ENCODE measurements at regions of chr3 and their contacts with region 1.

Region 1: GRCh38 chr3:149808209-149808829 is 4.7 kb upstream of the RNF13 start:
- DNase-seq: peak; percentile 67
- ATAC-seq: no peak
- H3K4me3 Mint-ChIP-seq: no peak overlapping the region
- H3K27ac Mint-ChIP-seq: no peak overlapping the region
- H3K4me1 Mint-ChIP-seq: peaks cover 13% of the 10 kb centered on the region
- H3K27me3 Mint-ChIP-seq: peaks cover 24% of the 10 kb centered on the region

Region 2: GRCh38 chr3:149258298-149258697 is 550.0 kb before region 1 on chr3:
- CTCF ChIA-PET with region 1: no interaction called
- DNase-seq: no peak
- ATAC-seq: no peak
- H3K4me3 Mint-ChIP-seq: no peak overlapping the region
- H3K27ac Mint-ChIP-seq: no peak overlapping the region
- H3K4me1 Mint-ChIP-seq: peaks cover 6% of the 10 kb centered on the region
- H3K27me3 Mint-ChIP-seq: peaks cover 7% of the 10 kb centered on the region

Region 3: DNA sequence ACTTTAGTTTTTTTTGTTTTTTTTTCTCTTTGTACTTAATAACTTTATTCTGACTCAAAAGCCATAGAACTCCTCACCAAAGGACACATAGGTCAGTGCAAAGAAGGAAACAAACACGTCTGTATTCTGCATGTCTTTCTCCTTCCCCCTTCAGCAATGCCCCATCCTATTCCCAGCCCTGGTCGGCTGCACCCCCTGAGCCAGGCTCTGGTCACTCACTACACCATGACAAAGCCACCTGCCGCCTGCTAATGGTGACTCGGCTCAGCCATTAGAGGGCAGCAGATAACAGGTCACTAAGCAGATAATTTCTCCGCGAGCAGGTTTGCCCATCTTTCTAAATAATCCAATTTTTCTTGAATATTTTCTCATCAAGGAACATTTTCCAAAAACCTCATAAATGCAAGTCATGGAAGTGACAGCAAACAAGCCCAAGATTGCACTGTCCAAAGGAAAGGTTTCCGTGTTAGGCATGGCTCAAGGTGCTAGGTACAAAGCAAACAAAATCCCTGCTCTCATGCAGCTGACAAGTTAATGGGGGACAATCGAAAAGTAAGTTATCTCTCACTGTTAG is 296.0 kb before region 1 on chr3:
- CTCF ChIA-PET with region 1: interaction called, 10 read pairs
- DNase-seq: peak; percentile 66
- ATAC-seq: peak; percentile 59
- H3K4me3 Mint-ChIP-seq: no peak overlapping the region
- H3K27ac Mint-ChIP-seq: no peak overlapping the region
- H3K4me1 Mint-ChIP-seq: peaks cover 16% of the 10 kb centered on the region
- H3K27me3 Mint-ChIP-seq: peaks cover 2% of the 10 kb centered on the region

Region 4: DNA sequence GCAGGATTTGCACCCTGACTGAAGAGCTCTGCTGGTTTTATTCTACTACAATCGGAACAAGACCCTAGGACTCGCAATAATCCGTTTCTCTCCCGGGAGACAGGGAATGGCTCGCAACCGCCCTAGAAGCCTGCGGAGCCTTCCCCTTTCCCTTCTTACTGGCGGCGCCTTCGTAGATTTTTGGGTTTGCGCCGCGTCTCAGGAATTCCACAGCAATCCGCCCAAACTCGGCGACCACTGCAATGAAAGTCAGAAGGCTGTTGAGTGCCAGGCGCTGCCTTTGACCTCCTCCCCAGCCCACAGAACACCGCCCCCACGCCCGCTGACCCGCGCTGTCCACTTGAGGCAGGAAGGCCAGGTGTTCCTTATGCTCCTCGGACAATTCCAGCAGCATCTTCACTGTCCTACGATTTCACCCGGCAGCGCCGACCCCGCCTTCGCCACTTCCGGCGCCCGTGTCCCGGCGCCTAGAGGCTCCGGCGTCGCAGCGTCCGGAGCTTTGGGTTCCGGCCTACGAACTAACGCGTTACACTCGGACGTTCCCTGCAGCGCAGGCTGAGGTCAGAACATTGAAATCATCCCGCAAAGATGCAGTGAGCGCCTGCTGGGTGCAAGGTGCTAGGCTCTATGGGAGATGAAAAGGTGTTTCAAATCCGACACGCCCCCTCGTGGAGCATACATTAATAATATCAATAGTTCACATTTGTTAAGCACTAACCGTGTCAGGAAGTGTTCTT is 56.1 kb before region 1 on chr3 and contains the start of gene COMMD2:
- CTCF ChIA-PET with region 1: interaction called, 18 read pairs
- DNase-seq: peak; percentile 91
- ATAC-seq: peak; percentile 98
- H3K4me3 Mint-ChIP-seq: peak within 1 kb of the TSS; percentile 96
- H3K27ac Mint-ChIP-seq: peak within 1 kb of the TSS; percentile 91
- H3K4me1 Mint-ChIP-seq: peaks cover 28% of the 10 kb centered on the region
- H3K27me3 Mint-ChIP-seq: no peaks in the 10 kb centered on the region
- total RNA-seq, gene COMMD2: 35.5 to 38.9 TPM

Region 5: DNA sequence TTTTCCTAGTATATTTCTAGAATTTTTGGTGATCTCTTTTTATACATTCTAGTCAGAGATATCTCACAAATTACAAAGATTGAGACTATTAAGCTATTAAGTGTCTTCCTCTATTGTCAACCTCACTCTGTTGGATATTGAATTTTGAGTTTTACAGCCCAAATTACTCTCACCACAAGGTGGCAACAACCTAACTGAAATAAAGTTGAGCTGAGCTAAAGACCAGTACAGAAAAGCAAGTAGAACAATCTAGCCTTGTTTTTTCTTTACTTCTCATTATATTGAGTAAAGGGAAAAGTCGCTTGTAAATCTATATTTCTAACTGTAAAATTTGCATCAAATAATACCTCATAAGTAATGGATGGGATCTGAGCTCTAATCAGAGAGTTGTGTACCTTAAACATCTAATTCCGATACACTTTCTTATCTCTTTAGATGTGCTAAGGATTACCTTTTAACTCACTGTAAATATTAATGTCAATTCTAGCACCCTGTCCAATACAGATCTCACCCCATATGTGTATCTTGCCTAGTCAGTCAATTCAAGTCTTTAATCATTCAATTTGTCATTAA is 42.5 kb before region 1 on chr3:
- CTCF ChIA-PET with region 1: interaction called, 34 read pairs
- DNase-seq: no peak
- ATAC-seq: no peak
- H3K4me3 Mint-ChIP-seq: no peak overlapping the region
- H3K27ac Mint-ChIP-seq: no peak overlapping the region
- H3K4me1 Mint-ChIP-seq: no peaks in the 10 kb centered on the region
- H3K27me3 Mint-ChIP-seq: peaks cover 35% of the 10 kb centered on the region

Region 6: GRCh38 chr3:149792452-149793270 is 15.7 kb before region 1 on chr3 and contains the start of gene ANKUB1:
- CTCF ChIA-PET with region 1: interaction called, 11 read pairs
- DNase-seq: no peak
- ATAC-seq: no peak
- H3K4me3 Mint-ChIP-seq: no peak within 1 kb of the TSS
- H3K27ac Mint-ChIP-seq: no peak within 1 kb of the TSS
- H3K4me1 Mint-ChIP-seq: no peaks in the 10 kb centered on the region
- H3K27me3 Mint-ChIP-seq: peaks cover 37% of the 10 kb centered on the region
- total RNA-seq, gene ANKUB1: not detected

Region 7: GRCh38 chr3:149830902-149831301 is 22.6 kb after region 1 on chr3:
- CTCF ChIA-PET with region 1: no interaction called
- DNase-seq: no peak
- ATAC-seq: no peak
- H3K4me3 Mint-ChIP-seq: no peak overlapping the region
- H3K27ac Mint-ChIP-seq: no peak overlapping the region
- H3K4me1 Mint-ChIP-seq: no peaks in the 10 kb centered on the region
- H3K27me3 Mint-ChIP-seq: no peaks in the 10 kb centered on the region

Region 8: DNA sequence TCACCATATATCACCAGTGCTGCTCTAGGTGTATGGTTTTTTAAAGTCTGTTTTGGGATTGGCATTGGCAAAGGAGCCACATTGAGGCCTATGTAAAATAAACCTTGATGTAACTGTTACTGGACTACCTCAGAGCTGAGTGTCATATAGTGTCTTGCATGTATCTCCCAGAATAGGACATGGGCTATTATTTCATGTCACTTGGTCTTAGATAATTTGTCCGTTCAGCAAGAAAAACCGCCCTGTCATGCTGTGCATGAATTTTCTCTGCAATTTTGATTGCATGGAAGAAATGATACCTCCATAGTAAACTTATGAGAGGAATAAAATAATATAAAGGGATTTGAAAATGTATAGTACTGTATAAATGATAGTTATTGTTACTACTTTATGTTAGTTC is 64.3 kb after region 1 on chr3:
- CTCF ChIA-PET with region 1: no interaction called
- DNase-seq: no peak
- ATAC-seq: no peak
- H3K4me3 Mint-ChIP-seq: no peak overlapping the region
- H3K27ac Mint-ChIP-seq: no peak overlapping the region
- H3K4me1 Mint-ChIP-seq: no peaks in the 10 kb centered on the region
- H3K27me3 Mint-ChIP-seq: no peaks in the 10 kb centered on the region